ENCODE measurements at regions of chr15 and their contacts with region 1.

Region 1: GRCh38 chr15:73240866-73241499 is 127.8 kb downstream of the HCN4 start:
- DNase-seq: peak; percentile 81
- ATAC-seq: no peak
- H3K4me3 ChIP-seq: no peak overlapping the region
- H3K27ac ChIP-seq: no peak overlapping the region
- H3K4me1 ChIP-seq: no peaks in the 10 kb centered on the region
- H3K27me3 ChIP-seq: no peaks in the 10 kb centered on the region
- CTCF ChIP-seq: peak; percentile 88

Region 2: GRCh38 chr15:73273181-73274002 is 32.4 kb after region 1 on chr15:
- CTCF ChIA-PET with region 1: interaction called, 3 read pairs
- POLR2A ChIA-PET with region 1: no interaction called
- intact Hi-C with region 1: loop called (anchors 1 kb)
- DNase-seq: peak; percentile 63
- ATAC-seq: peak; percentile 71; the same call in 1 of the 2 replicates
- H3K4me3 ChIP-seq: no peak overlapping the region
- H3K27ac ChIP-seq: no peak overlapping the region
- H3K4me1 ChIP-seq: no peaks in the 10 kb centered on the region
- H3K27me3 ChIP-seq: no peaks in the 10 kb centered on the region
- CTCF ChIP-seq: peak; percentile 75

Measured in PC-3 (cell line).